Activated T-helper 2 cell treated with anti-CD3 and anti-CD28 coated beads, Interferon-gamma antibody, Interleukin-2, Interleukin-4, amounts not matched to agents 10 μg/mL and 5 μg/mL and 100 μg/mL, durations not matched to agents 14 hours and 24 hours and 36 hours (primary cell): ENCODE measurements at regions of chr22 and their contacts with region 1.

Region 1: DNA sequence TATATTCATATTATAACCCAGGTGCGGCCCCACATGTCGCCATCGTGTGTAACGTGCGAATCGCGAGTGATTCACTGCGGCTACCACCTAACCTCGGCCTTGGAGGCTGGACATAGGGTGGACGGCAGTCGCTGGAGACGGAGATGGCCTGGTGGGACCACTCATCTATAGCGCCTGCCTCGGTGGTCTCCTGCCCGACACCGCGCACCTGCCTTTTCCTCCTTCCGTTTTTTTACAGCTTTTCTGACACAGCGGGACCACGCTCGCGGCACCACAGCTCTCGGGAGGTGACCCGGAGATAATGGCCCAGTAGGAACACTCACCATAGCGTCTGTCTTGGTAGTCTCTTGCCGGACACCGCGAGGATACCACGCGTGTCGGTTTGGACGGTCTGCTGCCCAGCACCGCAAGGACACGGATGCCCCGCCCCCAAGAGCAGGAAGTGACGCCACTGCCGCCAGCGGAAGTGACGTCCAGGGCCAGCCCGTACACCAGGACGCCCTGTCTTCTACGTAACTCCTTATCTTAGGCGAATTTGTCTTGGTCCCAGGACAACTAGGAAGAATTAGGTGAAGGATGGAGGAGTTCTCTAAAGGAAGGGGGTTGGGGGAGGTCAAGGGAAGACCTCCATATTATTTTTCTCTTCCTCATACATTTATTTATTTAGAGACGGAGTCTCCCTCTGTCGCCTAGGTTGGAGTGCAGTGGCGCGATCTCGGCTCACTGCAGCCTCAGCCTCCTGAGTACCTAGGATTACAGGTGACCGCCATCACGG is 6.4 kb downstream of the SNU13 start:
- DNase-seq: peak; percentile 80
- H3K4me3 Mint-ChIP-seq: peak overlapping the region; percentile 98
- H3K27ac Mint-ChIP-seq: peak overlapping the region; percentile 95
- H3K4me1 Mint-ChIP-seq: peaks cover 11% of the 10 kb centered on the region
- H3K27me3 Mint-ChIP-seq: no peaks in the 10 kb centered on the region

Region 2: DNA sequence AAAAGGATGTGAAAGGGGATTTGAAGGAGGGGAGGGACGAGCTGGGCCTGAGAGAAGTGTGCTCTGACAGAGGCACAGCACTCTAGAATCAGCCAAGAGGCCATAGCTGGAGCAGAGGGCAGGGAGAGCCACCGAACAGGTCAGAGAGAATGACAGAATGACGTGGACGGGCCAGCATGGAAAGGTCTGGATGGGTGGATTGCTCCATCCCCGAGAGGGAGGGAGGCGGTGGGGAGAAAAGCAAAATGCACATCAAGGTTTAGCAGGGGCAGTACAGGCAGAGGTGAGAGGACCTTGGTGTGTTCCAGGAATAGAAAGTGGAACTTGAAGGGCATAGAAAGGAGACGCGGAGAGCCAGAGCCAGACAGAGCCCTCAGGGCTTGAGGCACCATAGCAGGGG is 99.5 kb before region 1 on chr22:
- intact Hi-C with region 1: no loop called
- DNase-seq: no peak
- H3K4me3 Mint-ChIP-seq: no peak overlapping the region
- H3K27ac Mint-ChIP-seq: no peak overlapping the region
- H3K4me1 Mint-ChIP-seq: peaks cover under 1% of the 10 kb centered on the region
- H3K27me3 Mint-ChIP-seq: no peaks in the 10 kb centered on the region

Region 3: GRCh38 chr22:41666661-41667258 is 15.5 kb before region 1 on chr22:
- intact Hi-C with region 1: loop called (anchors 2 kb)
- DNase-seq: peak; percentile 95
- H3K4me3 Mint-ChIP-seq: peak overlapping the region; percentile 82
- H3K27ac Mint-ChIP-seq: peak overlapping the region; percentile 96
- H3K4me1 Mint-ChIP-seq: peaks cover 8% of the 10 kb centered on the region
- H3K27me3 Mint-ChIP-seq: no peaks in the 10 kb centered on the region